ENCODE measurements at regions of chr17 and their contacts with region 1.

Region 1: GRCh38 chr17:35416659-35417058 is 15.6 kb downstream of the SLFN12 start:
- DNase-seq: no peak
- ATAC-seq: no peak
- H3K4me3 ChIP-seq: no peak overlapping the region
- H3K27ac ChIP-seq: no peak overlapping the region
- H3K4me1 ChIP-seq: no peaks in the 10 kb centered on the region
- H3K27me3 ChIP-seq: no peaks in the 10 kb centered on the region
- CTCF ChIP-seq: no peak
- POLR2A ChIP-seq: no peak
- RAD21 ChIP-seq: no peak

Region 2: DNA sequence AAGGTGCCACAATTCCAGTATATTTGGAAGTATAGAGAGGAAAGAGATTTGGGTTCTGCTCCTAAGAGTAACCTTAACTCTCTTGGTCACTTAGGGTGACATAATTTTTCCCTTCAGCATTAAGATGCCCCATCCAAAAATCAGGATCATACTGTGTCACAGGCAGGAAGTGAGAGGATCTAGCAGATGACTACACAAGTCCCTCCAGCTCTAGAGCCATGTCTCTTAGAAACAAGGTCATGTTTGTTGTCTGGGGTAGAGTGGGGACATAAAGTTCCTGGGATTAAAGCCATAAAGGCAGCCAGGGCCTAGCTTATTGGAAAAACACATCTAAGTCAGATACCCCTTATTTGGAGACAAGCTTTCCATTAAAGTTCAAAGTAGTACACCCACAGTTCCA is 1094.7 kb before region 1 on chr17:
- CTCF ChIA-PET with region 1: no interaction called
- POLR2A ChIA-PET with region 1: interaction called, 12 read pairs
- dilution Hi-C with region 1: no loop called
- in situ Hi-C with region 1: no loop called
- intact Hi-C with region 1: no loop called
- DNase-seq: no peak
- ATAC-seq: no peak
- H3K4me3 ChIP-seq: no peak overlapping the region
- H3K27ac ChIP-seq: no peak overlapping the region
- H3K4me1 ChIP-seq: no peaks in the 10 kb centered on the region
- H3K27me3 ChIP-seq: no peaks in the 10 kb centered on the region; the same call in 1 of the 2 replicates
- CTCF ChIP-seq: no peak
- POLR2A ChIP-seq: no peak
- RAD21 ChIP-seq: no peak

Measured in IMR-90 (cell line).